Activated CD4-positive, alpha-beta memory T cell treated with anti-CD3 and anti-CD28 coated beads for 36 hours (primary cell): ENCODE measurements at regions of chrX and their contacts with region 1.

Region 1: GRCh38 chrX:133792198-133792953 is 193.0 kb downstream of the GPC3 start:
- DNase-seq: peak; percentile 60
- H3K4me3 Mint-ChIP-seq: no peak overlapping the region
- H3K27ac Mint-ChIP-seq: no peak overlapping the region
- H3K4me1 Mint-ChIP-seq: no peaks in the 10 kb centered on the region
- H3K27me3 Mint-ChIP-seq: no peaks in the 10 kb centered on the region

Region 2: DNA sequence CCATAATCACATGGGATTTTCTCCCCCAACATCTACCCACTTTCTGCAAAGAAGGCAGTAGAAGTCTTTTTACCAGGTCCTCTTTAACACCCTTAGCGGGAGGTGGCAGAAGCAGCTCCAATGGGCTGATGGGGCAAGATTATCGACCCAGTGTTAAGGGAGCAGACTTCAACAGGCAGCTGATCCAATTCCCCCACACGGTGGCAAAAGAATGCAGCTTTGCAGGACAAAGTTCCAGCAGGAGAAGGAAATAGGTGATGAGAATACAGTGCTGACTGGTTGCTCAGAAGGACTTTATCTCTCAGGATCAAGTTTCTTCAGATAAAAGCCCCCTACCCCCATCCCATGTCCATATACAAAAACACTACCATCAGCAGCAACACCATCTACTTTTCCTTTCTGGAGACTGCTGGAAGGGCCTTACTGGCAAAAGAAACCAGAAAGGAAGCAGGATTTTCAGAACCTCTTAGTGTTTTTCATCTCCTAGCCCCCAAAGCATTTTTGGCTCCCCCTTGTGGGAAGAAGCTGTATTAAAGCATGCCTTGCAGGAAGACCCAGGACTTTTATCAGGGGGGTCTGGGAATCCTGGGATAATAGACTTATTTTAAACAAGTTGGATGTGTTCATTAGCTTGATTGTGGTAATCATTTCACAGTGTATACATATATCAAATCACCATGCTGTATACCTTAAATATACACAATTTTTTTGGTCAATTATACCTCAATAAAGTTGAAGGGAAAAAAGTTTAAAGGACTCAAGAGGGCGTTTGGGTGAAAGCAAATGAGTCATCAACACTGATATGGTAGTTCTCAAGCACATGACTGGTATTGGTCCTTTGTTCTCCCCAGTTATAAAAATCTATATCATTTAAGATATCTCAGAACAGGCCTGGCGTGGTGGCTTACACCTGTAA is 46.6 kb after region 1 on chrX:
- CTCF ChIA-PET with region 1: interaction called, 13 read pairs
- POLR2A ChIA-PET with region 1: no interaction called
- intact Hi-C with region 1: loop called (anchors 1 kb)
- DNase-seq: peak; percentile 9
- H3K4me3 Mint-ChIP-seq: no peak overlapping the region
- H3K27ac Mint-ChIP-seq: no peak overlapping the region
- H3K4me1 Mint-ChIP-seq: no peaks in the 10 kb centered on the region
- H3K27me3 Mint-ChIP-seq: no peaks in the 10 kb centered on the region

Region 3: GRCh38 chrX:133859860-133860259 is 67.5 kb after region 1 on chrX:
- CTCF ChIA-PET with region 1: no interaction called
- POLR2A ChIA-PET with region 1: no interaction called
- intact Hi-C with region 1: no loop called
- DNase-seq: no peak
- H3K4me3 Mint-ChIP-seq: no peak overlapping the region
- H3K27ac Mint-ChIP-seq: no peak overlapping the region
- H3K4me1 Mint-ChIP-seq: no peaks in the 10 kb centered on the region
- H3K27me3 Mint-ChIP-seq: peaks cover 2% of the 10 kb centered on the region

Region 4: GRCh38 chrX:133921764-133922389 is 129.5 kb after region 1 on chrX:
- CTCF ChIA-PET with region 1: interaction called, 9 read pairs
- POLR2A ChIA-PET with region 1: no interaction called
- intact Hi-C with region 1: loop called (anchors 2 kb)
- DNase-seq: peak; percentile 52
- H3K4me3 Mint-ChIP-seq: no peak overlapping the region
- H3K27ac Mint-ChIP-seq: no peak overlapping the region
- H3K4me1 Mint-ChIP-seq: peaks cover 17% of the 10 kb centered on the region
- H3K27me3 Mint-ChIP-seq: no peaks in the 10 kb centered on the region

Region 5: GRCh38 chrX:134020910-134021309 is 228.5 kb after region 1 on chrX:
- CTCF ChIA-PET with region 1: interaction called, 48 read pairs
- POLR2A ChIA-PET with region 1: no interaction called
- intact Hi-C with region 1: loop called (anchors 1 kb)
- DNase-seq: no peak
- H3K4me3 Mint-ChIP-seq: no peak overlapping the region
- H3K27ac Mint-ChIP-seq: no peak overlapping the region
- H3K4me1 Mint-ChIP-seq: no peaks in the 10 kb centered on the region
- H3K27me3 Mint-ChIP-seq: peaks cover 3% of the 10 kb centered on the region

Region 6: DNA sequence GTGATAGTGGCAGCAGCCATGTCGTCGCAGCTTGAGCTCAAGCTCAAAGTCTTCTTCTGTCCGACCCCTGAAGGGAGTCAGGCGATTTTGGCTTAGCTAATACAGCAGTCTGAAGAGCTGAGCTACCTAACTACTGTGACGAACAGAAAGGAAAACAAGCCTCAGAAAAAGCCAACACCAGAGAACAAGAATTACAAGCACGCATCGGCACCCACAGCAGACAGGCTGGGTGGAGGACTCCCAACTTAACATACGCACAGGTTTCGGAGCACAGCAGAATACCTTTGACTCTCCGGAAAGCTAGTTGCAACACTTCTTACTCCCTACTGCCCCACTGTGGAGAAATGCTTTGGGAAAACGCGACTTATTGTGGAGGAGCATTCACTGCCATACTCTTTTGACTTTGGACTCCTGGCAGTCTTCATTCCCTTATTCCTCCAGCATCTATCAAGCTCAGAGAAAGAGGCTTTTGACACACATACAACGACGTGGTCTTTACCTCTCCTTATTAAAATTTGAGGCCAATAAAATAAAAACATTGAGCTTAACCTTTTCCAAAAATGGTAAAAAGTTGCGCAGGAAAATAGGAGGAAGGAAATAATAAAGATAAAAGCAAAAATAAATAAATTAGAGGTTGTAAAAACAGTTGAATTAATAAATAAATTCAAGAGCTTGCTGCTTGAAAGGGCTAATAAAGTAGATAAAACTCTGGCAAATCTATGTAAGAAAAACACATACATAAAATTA is 234.4 kb after region 1 on chrX:
- CTCF ChIA-PET with region 1: interaction called, 48 read pairs
- POLR2A ChIA-PET with region 1: no interaction called
- intact Hi-C with region 1: loop called (anchors 1 kb)
- DNase-seq: peak; percentile 26
- H3K4me3 Mint-ChIP-seq: no peak overlapping the region
- H3K27ac Mint-ChIP-seq: no peak overlapping the region
- H3K4me1 Mint-ChIP-seq: no peaks in the 10 kb centered on the region
- H3K27me3 Mint-ChIP-seq: no peaks in the 10 kb centered on the region

Region 7: DNA sequence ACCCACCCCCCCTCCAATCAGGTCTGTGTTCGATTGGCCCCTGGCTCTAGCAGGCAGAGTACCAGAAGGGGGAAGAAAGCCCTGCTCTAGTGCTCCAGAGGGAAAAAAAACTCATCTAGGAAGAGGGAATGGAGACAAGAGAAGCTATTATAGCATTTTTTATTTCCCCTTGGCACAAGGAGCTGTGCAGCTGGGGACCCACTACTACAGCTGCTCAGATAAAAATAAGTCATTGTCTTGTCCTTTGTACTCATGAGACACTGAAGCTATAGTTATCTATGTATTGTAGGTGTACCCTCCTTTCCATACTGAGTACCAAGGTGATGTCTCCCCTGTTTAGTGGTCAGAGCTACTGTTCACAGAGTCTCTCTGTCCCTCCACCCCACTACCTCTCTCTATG is 458.9 kb after region 1 on chrX:
- CTCF ChIA-PET with region 1: interaction called, 7 read pairs
- POLR2A ChIA-PET with region 1: no interaction called
- intact Hi-C with region 1: loop called (anchors 10 kb)
- DNase-seq: no peak
- H3K4me3 Mint-ChIP-seq: no peak overlapping the region
- H3K27ac Mint-ChIP-seq: no peak overlapping the region
- H3K4me1 Mint-ChIP-seq: no peaks in the 10 kb centered on the region
- H3K27me3 Mint-ChIP-seq: no peaks in the 10 kb centered on the region

Region 8: GRCh38 chrX:134396174-134396573 is 603.8 kb after region 1 on chrX:
- CTCF ChIA-PET with region 1: interaction called, 7 read pairs
- POLR2A ChIA-PET with region 1: no interaction called
- intact Hi-C with region 1: loop called (anchors 10 kb)
- DNase-seq: no peak
- H3K4me3 Mint-ChIP-seq: no peak overlapping the region
- H3K27ac Mint-ChIP-seq: no peak overlapping the region
- H3K4me1 Mint-ChIP-seq: peaks cover 2% of the 10 kb centered on the region
- H3K27me3 Mint-ChIP-seq: no peaks in the 10 kb centered on the region